ENCODE measurements at regions of chr18 and their contacts with region 1.

Region 1: DNA sequence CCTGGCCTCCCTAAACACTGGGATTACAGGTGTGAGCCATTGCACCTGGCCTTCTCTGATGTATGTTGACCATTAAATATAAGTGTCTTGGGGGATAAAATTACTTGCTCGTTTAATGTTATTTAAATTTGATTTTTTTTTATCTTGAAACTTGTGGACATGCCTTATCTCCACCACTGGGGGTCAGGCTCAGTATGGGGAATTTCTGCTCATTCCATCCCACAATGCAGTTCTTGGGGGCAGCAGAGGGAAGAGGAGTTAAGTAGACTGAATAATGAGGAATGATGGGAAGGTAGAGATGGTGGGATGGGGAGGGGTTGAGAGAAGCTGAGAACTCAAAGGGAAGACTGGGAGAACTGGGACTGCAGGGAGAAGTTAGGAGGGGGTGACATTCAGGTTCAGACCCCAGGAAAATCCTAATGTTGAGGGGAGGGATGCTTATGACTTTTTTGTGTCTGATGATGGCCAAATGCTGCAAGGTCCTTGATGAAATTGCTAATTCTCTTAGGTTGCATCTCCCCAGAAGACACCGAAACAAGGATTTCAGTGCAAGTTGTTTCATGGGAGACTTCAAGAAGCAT is 174.2 kb downstream of the MIB1 start:
- DNase-seq: no peak
- CTCF ChIP-seq: peak; percentile 24

Region 2: DNA sequence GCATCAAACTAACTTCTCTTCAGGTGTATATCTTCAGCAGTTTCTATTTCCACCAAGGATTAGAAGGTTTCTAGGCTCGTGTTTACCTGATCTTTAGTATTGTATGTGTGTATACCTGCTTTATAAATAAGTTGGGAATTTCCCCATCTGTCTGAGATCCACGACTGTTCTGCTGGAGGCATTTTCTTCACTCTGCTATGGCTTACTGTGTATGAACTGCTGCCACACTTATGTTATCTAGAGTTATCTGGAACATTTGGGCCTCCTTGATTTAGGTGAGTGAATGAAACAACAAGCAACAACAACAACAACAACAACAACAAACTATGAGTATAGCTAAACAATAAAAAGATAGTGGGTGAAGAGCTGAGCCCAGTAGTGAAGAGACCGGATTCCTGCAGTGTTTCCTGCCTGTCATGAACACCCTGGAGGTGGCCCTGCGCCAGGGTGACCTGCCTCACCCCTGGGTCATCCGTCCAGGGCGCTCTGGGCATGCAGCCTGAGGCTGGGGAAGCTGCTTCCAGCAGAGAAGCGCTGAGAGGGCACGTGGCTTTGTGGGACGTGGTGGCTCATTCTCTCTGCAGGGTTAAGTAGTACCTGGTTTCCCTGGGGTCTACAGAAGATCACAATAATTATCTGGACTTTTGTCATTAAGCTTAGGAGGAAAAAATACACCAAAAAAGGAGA is 198.5 kb after region 1 on chr18:
- in situ Hi-C with region 1: no loop called
- DNase-seq: no peak
- CTCF ChIP-seq: no peak

Region 3: GRCh38 chr18:22563098-22563707 is 648.4 kb after region 1 on chr18:
- in situ Hi-C with region 1: loop called (anchors 25 kb)
- DNase-seq: peak; percentile 57
- CTCF ChIP-seq: peak; percentile 49

Measured in GM13976 (cell line).